ENCODE measurements at regions of chr1 and their contacts with region 1.

Region 1: DNA sequence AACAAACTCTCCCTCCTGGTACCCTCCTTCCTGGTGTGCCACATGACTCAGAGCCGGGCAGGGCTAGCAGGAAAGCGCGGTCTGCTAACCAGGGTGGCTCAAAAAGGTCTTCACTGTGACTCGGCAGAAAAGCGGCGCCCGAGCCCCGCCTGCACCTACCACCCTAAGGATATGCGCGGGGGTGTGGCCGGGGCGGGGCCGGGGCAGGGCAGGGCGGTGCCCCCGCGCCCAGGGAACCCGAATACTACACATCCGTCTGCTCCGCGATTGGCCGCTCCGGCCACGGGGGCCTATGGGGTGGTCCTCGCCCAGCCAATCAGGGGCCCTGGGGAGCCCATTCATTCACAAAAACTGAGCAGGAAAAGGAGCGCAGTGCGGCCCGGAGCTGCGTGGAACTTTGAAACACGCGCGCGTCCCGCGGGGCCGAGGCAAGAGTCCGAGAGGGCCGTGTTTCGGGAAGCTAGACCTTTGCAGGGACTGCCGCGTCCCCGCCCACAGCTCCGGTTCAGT is 1.7 kb downstream of the LRP8 start:
- DNase-seq: peak; percentile 98
- H3K4me3 Mint-ChIP-seq: peak overlapping the region; percentile 98
- H3K27ac Mint-ChIP-seq: peak overlapping the region; percentile 88
- H3K4me1 Mint-ChIP-seq: peaks cover 57% of the 10 kb centered on the region
- H3K27me3 Mint-ChIP-seq: no peaks in the 10 kb centered on the region

Region 2: GRCh38 chr1:53220171-53220961 is 105.8 kb before region 1 on chr1 and contains the start of gene CZIB:
- CTCF ChIA-PET with region 1: no interaction called
- POLR2A ChIA-PET with region 1: interaction called, 11 read pairs
- DNase-seq: peak; percentile 94
- H3K4me3 Mint-ChIP-seq: peak within 1 kb of the TSS; percentile 89
- H3K27ac Mint-ChIP-seq: peak within 1 kb of the TSS; percentile 92
- H3K4me1 Mint-ChIP-seq: peaks cover 29% of the 10 kb centered on the region
- H3K27me3 Mint-ChIP-seq: no peaks in the 10 kb centered on the region
- total RNA-seq, gene CZIB: 38.2 to 41.3 TPM

Region 3: GRCh38 chr1:53294567-53294966 is 31.6 kb before region 1 on chr1:
- CTCF ChIA-PET with region 1: interaction called, 4 read pairs
- POLR2A ChIA-PET with region 1: interaction called, 40 read pairs
- DNase-seq: peak; percentile 64
- H3K4me3 Mint-ChIP-seq: no peak overlapping the region
- H3K27ac Mint-ChIP-seq: peak overlapping the region; percentile 90
- H3K4me1 Mint-ChIP-seq: peaks cover 55% of the 10 kb centered on the region
- H3K27me3 Mint-ChIP-seq: no peaks in the 10 kb centered on the region

Region 4: DNA sequence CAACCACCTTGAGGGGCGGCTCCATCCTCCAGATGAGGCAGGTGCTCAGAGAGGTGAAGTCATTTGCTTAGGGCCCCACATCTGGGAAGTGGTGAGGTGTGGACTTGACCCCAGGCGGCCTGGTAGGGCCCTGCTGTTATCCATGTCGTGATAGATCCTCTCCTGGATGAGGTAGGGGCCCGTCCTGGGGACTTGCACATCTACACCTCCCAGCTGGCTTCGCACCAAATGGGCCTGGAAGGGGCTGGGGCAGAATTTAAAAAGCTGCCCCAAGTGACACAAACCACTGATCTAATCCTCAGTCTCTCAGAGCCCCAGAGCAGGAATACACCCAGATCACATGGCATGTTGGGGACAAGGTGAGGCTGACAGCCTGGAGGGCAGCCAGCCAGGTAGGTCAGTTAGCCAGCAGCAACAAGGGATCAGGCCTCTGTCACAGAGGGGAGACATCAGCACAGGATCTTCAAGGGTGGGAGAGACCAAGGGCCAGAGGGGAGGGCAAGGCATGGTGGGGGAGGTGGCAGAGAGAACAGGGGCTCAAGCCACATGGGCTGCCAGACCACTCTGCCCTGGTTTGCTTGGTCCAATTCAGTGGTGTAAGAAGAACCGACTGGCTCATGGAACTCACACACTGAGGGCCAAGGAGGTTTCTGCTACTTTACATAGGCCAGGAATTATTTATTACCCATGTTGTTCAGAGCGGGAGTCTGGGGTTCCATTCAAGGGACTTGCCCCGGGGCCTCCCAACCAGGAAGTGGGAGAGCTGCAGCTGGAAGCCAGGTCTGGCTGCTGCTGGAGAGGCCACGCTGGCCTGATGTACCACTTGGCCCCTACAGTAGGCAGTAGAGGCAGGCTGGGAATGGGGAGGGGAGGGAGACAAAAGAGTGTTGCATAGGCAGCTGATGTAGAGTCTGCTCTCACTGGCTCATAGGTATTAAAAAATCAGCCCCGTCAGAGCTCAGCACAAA is 10.4 kb before region 1 on chr1:
- CTCF ChIA-PET with region 1: no interaction called
- POLR2A ChIA-PET with region 1: interaction called, 13 read pairs
- DNase-seq: no peak
- H3K4me3 Mint-ChIP-seq: no peak overlapping the region
- H3K27ac Mint-ChIP-seq: peak overlapping the region; percentile 58
- H3K4me1 Mint-ChIP-seq: peaks cover 14% of the 10 kb centered on the region
- H3K27me3 Mint-ChIP-seq: no peaks in the 10 kb centered on the region

Region 5: DNA sequence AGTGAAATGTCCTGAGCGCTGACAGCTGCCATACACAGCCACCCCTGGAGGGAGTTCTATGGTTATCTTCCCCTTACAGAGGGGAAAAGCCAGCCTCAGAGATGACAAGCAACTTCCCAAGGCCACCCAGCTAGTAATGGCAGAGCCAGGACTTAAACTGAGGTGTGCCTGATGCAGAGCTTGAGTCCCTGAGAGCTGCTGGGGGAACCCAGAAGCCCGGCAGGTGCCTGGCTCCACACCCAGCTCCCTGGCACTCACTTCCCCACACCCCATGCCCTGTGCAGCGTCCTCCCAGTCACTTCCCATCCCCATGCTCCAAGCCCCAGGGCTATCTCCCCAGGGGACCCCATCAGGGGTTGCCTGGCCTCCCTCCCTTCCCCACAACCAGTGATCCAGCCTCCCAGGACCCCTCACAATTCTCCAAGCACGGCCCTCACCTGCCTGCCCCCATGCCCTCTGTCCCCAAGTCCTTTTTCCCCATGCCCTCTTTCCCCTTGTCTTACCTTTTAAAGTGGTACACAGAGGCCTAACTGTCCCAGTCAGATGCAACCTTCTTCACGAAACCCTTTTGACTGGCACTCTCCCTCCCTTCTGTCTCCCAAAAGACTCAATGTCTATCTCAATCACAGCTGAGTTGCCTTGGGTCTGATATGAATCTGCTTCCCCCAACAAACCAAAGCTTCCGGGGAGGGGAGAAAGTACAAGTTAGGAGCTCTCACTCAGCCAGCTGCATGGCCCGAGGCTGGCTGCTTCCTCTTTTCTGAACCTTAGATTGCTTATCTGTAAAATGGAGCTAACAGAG is 41.6 kb after region 1 on chr1:
- CTCF ChIA-PET with region 1: interaction called, 10 read pairs
- POLR2A ChIA-PET with region 1: interaction called, 30 read pairs
- DNase-seq: peak; percentile 69
- H3K4me3 Mint-ChIP-seq: peak overlapping the region; percentile 72
- H3K27ac Mint-ChIP-seq: peak overlapping the region; percentile 75
- H3K4me1 Mint-ChIP-seq: peaks cover 20% of the 10 kb centered on the region
- H3K27me3 Mint-ChIP-seq: no peaks in the 10 kb centered on the region

Region 6: GRCh38 chr1:53393325-53393792 is 67.2 kb after region 1 on chr1:
- CTCF ChIA-PET with region 1: interaction called, 11 read pairs
- POLR2A ChIA-PET with region 1: interaction called, 14 read pairs
- DNase-seq: peak; percentile 71
- H3K4me3 Mint-ChIP-seq: no peak overlapping the region
- H3K27ac Mint-ChIP-seq: no peak overlapping the region
- H3K4me1 Mint-ChIP-seq: peaks cover 5% of the 10 kb centered on the region
- H3K27me3 Mint-ChIP-seq: peaks cover 2% of the 10 kb centered on the region

Region 7: GRCh38 chr1:53413175-53414001 is 87.2 kb after region 1 on chr1:
- CTCF ChIA-PET with region 1: interaction called, 5 read pairs
- POLR2A ChIA-PET with region 1: interaction called, 42 read pairs
- DNase-seq: peak; percentile 78
- H3K4me3 Mint-ChIP-seq: peak overlapping the region; percentile 21
- H3K27ac Mint-ChIP-seq: peak overlapping the region; percentile 99
- H3K4me1 Mint-ChIP-seq: peaks cover 54% of the 10 kb centered on the region
- H3K27me3 Mint-ChIP-seq: no peaks in the 10 kb centered on the region

Region 8: DNA sequence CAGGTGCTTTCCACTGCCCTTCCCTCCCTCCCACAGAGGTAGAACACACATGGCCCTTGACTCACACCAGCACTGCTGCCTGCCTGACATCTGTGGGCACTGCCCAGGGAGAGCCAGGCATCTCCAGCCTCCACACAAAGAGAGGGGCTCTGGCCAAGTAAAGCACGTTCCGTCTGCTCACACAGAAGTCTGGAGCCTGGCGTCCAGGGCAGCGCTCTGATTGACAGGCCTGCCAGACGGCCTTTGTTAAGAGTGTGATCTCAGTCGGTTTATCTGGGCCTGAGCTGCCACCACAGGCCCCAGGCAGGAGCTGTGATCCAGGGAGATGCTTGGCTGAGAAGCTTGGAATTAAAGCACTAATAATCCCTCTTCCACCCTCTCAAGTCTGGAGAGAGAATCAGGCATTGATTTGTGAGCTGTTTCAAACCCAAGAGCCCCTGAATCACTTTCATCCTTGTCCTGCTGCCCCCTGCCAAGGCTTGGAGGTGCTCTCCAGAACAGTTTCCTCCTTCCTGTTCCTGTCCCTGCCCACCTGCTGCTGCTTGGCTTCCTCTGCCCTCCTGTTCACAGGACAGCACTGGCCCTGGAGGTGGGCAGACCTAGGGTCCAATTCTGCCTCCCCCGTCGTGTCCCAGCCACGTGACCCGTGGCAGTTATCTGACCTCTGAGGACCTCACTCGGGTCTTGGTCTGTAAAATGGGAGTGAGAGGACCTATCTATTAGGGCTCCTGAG is 136.8 kb after region 1 on chr1:
- CTCF ChIA-PET with region 1: no interaction called
- POLR2A ChIA-PET with region 1: no interaction called
- DNase-seq: no peak
- H3K4me3 Mint-ChIP-seq: no peak overlapping the region
- H3K27ac Mint-ChIP-seq: no peak overlapping the region
- H3K4me1 Mint-ChIP-seq: no peaks in the 10 kb centered on the region
- H3K27me3 Mint-ChIP-seq: no peaks in the 10 kb centered on the region

Measured in activated CD4-positive, alpha-beta memory T cell treated with anti-CD3 and anti-CD28 coated beads, Interleukin-2, amount 10 ng/mL, durations not matched to agents 7 days and 5 days (primary cell).